GM23248 (cell line): ENCODE measurements at regions of chrX and their contacts with region 1.

Region 1: DNA sequence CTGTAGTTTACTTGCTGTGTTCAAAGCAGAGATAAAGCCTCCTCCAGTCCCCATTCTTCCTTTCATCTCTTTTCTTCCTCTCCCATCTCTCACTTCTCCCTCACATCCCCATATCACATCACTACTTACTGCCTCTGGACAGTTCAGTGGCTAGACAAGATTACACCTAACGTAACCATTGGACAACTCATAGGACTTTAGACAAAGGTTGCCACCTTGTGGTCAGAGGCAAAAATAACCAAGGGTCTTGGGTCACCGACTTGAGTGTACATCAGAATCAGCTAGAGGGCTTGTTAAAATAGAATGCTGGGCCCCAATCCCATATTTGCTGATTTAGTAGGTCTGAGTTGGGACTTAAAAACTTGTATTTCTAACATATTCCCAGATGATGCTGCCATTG is 109.3 kb upstream of the DGKK start:
- DNase-seq: peak; percentile 53
- H3K4me3 ChIP-seq: no peak overlapping the region
- H3K27ac ChIP-seq: no peak overlapping the region
- H3K4me1 ChIP-seq: no peaks in the 10 kb centered on the region
- H3K27me3 ChIP-seq: no peaks in the 10 kb centered on the region

Region 2: DNA sequence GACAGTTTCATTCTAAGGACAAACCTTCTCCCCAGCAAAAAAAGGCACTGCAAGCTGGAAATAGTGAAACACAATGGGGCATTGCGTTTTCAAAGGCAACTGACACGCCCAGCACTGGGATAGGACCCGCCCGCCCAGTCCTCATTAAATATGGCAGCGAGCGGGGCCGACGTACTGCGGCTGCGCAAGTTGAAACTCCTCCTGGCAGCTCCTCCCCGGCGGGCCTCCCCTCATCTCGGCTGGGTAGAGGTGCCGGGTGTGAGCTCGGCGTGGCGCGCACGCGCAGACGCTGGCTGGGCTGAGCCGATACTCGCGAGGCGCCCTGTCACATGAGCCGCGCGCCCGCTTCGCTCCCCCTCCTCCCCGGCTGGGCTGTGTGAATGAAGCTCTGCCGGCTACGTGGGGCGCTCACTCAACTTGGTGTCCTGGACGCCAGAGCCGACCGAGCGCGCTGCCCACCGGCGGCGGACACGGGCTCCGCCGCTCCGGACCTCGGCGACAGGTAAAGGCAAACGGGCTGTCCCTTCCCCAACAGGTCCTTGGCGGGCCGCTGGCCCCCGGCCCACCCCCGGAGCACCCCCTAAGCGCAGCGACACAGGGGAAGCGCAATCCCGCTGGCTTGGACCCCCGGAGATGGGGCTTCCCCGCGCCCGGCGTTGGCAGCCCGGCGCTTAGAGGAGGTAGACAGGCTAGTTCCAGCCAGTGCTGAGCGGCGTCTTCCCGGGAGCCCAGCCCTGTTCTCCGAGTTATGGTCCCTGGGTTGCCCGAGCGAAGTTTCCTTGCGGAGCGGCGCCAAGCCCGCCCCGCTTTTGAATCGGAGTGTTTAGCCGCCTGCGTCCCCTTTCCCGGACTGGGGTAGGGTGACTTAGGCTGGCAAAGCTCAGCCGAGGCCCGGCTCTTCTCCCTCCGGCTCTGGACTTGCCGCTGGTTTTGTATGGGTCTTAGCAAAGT is 657.4 kb before region 1 on chrX and contains the start of gene CLCN5:
- in situ Hi-C with region 1: loop called (anchors 25 kb)
- DNase-seq: peak; percentile 93
- H3K4me3 ChIP-seq: peak within 1 kb of the TSS; percentile 75
- H3K27ac ChIP-seq: peak within 1 kb of the TSS; percentile 51
- H3K4me1 ChIP-seq: 0 out of 2 replicates have a peak, but pooled peaks cover 8% of the 10 kb centered on the region
- H3K27me3 ChIP-seq: no peaks in the 10 kb centered on the region
- total RNA-seq, gene CLCN5: 2.9 and 4.6 TPM in 2 replicates